Panc1 (cell line): ENCODE measurements at regions of chr21 and their contacts with region 1.

Region 1: DNA sequence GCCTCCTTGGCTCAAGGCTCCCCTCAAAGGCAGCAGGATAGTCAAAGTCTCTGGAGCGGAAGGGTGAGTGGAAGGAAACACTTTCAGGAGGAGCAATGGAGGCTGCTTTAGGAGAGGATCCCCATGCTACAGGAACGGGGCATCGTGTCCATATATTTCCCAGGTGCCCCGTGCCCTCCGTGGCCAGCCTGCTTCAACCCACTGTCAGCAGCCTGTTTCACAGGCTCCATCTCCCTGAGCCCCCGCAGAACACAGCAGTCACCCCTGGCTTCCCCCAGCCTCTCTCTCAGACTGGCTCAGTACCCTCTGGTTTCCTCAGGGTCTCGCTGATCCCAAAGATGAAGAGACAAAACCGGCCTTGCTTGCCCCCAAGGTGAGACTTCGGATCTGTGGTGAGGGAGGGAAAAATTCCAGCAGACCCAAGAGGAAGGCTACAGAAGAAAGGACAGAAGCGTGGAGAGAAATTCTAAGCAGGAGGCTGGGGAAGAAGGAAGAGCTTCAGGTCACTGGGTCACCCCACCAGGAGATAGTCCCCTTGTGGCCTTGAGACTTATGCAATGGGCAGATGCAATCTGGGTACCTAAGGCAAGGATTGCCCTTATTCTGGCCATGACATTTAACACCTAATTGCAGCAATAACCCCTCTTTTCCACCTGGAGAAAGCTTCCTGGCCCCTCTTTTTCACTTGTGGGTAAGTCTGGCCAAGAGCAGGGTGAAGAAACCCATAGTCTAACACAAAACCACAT is 9.2 kb upstream of the BRWD1 start:
- DNase-seq: no peak
- ATAC-seq: no peak
- H3K4me3 ChIP-seq: no peak overlapping the region
- H3K27ac ChIP-seq: no peak overlapping the region
- H3K4me1 ChIP-seq: peaks cover 3% of the 10 kb centered on the region
- H3K27me3 ChIP-seq: no peaks in the 10 kb centered on the region
- CTCF ChIP-seq: no peak

Region 2: DNA sequence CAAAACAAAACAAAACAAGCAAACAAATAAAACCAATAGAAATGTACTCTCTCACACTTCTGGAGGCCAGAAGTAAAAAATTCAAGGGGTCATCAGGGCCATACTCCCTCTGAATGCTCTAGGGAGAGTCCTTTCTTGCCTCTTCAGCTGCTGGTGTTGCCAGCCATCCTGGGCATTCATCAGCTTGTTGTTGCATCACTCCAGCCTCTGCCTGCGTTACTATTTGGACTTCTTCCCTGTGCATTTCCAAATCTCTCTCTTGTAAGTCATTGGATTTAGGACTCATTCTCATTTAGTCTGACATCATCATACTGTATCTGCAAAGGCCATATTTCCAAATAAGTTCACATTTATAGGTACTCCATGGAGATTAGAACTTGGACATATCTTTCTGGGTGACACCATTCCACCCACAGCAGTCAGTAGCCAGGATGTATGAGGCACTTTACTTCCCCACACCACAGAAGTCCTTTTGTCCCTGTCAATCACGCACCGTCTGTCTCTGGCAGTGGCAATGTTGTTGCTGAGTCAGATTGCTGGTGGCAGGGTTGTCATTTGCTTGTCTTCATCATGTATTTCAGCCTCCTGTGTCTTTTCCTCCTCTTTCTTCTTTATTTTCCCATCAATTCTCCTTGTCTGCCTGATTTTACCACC is 1255.4 kb before region 1 on chr21:
- CTCF ChIA-PET with region 1: no interaction called
- POLR2A ChIA-PET with region 1: interaction called, 11 read pairs
- in situ Hi-C with region 1: no loop called
- intact Hi-C with region 1: no loop called
- DNase-seq: no peak
- ATAC-seq: no peak
- H3K4me3 ChIP-seq: no peak overlapping the region
- H3K27ac ChIP-seq: no peak overlapping the region
- H3K4me1 ChIP-seq: no peaks in the 10 kb centered on the region
- H3K27me3 ChIP-seq: no peaks in the 10 kb centered on the region
- CTCF ChIP-seq: no peak

Region 3: DNA sequence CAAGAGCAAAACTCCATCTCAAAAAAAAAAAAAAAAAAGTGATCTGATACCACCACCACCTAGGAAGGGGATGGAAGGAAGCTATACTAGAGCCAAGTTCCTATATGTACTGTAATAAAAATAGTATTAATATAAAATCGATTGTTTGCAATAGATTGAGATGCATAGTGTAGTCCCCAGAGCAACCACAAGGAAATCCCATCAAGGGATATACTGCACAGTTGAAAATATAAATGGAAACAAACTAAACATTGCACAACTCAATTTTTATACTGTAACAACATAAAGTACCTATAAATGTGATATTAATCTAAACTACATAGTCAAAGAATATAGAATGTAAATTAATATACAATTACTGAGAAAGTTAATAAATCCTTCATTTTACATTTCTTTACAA is 118.5 kb before region 1 on chr21:
- CTCF ChIA-PET with region 1: no interaction called
- POLR2A ChIA-PET with region 1: interaction called, 12 read pairs
- in situ Hi-C with region 1: no loop called
- intact Hi-C with region 1: no loop called
- DNase-seq: no peak
- ATAC-seq: no peak
- H3K4me3 ChIP-seq: no peak overlapping the region
- H3K27ac ChIP-seq: no peak overlapping the region
- H3K4me1 ChIP-seq: no peaks in the 10 kb centered on the region
- H3K27me3 ChIP-seq: no peaks in the 10 kb centered on the region
- CTCF ChIP-seq: no peak

Region 4: GRCh38 chr21:39637197-39637970 is 314.7 kb after region 1 on chr21:
- CTCF ChIA-PET with region 1: no interaction called
- POLR2A ChIA-PET with region 1: no interaction called
- in situ Hi-C with region 1: no loop called
- intact Hi-C with region 1: no loop called
- DNase-seq: no peak
- ATAC-seq: no peak
- H3K4me3 ChIP-seq: no peak overlapping the region
- H3K27ac ChIP-seq: no peak overlapping the region
- H3K4me1 ChIP-seq: no peaks in the 10 kb centered on the region
- H3K27me3 ChIP-seq: peaks cover 2% of the 10 kb centered on the region
- CTCF ChIP-seq: no peak